Naive thymus-derived CD4-positive, alpha-beta T cell (primary cell): ENCODE measurements at regions of chr5 and their contacts with region 1.

Region 1: GRCh38 chr5:109900911-109901627 is 211.3 kb downstream of the MAN2A1 start:
- DNase-seq: no peak
- ATAC-seq: no peak
- H3K4me3 ChIP-seq: no peak overlapping the region
- H3K4me3 Mint-ChIP-seq: no peak overlapping the region
- H3K27ac ChIP-seq: no peak overlapping the region
- H3K27ac Mint-ChIP-seq: no peak overlapping the region
- H3K4me1 ChIP-seq: no peaks in the 10 kb centered on the region
- H3K4me1 Mint-ChIP-seq: peaks cover 0 to 22% (median 8%) of the 10 kb centered on the region in 7 donors
- H3K27me3 ChIP-seq: no peaks in the 10 kb centered on the region
- H3K27me3 Mint-ChIP-seq: peaks cover 0 to 4% (median 0%) of the 10 kb centered on the region in 5 donors

Region 2: DNA sequence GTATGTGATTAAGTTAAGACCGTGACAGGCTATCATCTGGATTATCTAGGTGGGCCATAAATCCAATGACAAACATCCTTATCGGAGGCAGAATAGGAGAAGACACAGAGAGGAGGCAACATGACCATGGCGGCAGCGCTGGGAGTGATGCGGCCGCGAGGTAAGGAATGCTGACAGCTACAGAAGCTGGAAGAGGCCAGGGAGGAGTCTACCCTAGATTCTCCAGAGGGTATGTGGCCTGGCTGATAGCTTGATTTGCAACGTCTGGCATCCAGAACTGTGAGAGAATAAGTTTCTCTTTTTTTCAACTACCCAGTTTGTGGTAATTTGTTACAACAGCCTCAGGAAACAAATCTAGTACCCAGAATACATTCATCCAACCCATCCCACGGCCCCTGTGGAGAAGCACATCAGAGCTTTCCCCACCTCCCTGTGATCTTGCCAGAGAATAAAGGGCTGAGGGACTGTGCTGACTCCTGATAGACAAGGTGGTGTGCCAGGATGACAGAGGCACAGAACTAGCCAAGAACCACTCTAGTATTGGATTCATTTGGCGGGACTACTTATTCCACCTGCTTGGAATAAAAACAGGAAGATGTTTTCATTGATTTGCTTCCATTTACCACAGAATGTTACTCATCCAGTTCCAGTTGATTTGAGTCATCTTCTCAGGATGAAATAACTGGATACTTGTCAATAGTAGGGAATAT is 24.0 kb before region 1 on chr5:
- CTCF ChIA-PET with region 1: no interaction called
- POLR2A ChIA-PET with region 1: interaction called, 3 read pairs
- intact Hi-C with region 1: loop called in 1 of 2 experiments (anchors 2 kb)
- DNase-seq: no peak
- ATAC-seq: no peak
- H3K4me3 ChIP-seq: no peak overlapping the region
- H3K4me3 Mint-ChIP-seq: peak overlapping the region in 1 of 10 donors; percentile 75
- H3K27ac ChIP-seq: no peak overlapping the region
- H3K27ac Mint-ChIP-seq: peak overlapping the region in 2 of 9 donors; percentile 42 to 76
- H3K4me1 ChIP-seq: peaks cover 0 to 17% of the 10 kb centered on the region in 2 donors
- H3K4me1 Mint-ChIP-seq: peaks cover 17 to 61% (median 45%) of the 10 kb centered on the region in 7 donors
- H3K27me3 ChIP-seq: no peaks in the 10 kb centered on the region
- H3K27me3 Mint-ChIP-seq: no peaks in the 10 kb centered on the region

Region 3: DNA sequence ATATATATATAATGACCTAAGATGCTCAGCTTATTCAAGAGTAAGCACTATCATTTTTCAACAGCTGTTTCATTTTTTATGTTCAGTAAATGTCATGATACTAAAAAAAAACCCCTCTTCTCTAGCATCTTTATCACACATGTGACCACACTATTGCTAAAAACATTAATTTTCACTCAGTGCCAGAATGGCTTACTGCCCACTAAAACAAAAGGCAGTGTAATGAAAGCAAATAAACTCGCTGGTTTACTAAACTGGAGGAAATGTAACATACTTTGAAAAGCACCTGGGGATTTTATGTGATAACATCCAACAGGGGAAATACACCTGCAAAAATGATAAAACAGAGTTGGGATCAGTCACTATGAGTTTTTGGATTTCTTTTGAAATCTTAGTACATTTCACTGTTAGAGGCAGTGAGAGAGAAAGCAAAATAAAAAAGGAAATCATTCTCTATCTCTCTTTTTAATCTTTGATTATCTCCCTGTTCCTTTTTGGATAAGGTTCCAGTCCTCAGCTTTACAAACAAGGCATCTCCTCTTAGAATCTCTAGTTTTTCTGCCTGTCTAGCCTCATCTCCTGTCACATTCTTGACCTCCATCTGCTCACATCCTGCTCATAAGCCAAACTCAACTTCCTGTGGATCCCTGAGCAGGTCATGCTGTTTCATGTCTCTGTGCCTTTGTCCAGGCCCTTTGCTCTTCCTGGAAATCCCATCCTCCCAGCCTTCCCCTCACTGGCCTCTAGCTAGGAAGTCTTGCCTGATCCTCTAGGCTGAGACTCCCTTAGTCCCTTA is 126.7 kb after region 1 on chr5:
- CTCF ChIA-PET with region 1: no interaction called
- POLR2A ChIA-PET with region 1: no interaction called
- intact Hi-C with region 1: no loop called
- DNase-seq: no peak
- ATAC-seq: no peak
- H3K4me3 ChIP-seq: no peak overlapping the region
- H3K4me3 Mint-ChIP-seq: no peak overlapping the region
- H3K27ac ChIP-seq: no peak overlapping the region
- H3K27ac Mint-ChIP-seq: peak overlapping the region in 2 of 9 donors; percentile 10 to 23
- H3K4me1 ChIP-seq: peaks cover 8 to 11% of the 10 kb centered on the region in 2 donors
- H3K4me1 Mint-ChIP-seq: peaks cover 5 to 46% (median 31%) of the 10 kb centered on the region in 7 donors
- H3K27me3 ChIP-seq: no peaks in the 10 kb centered on the region
- H3K27me3 Mint-ChIP-seq: no peaks in the 10 kb centered on the region

Region 4: GRCh38 chr5:110625376-110625999 is 724.4 kb after region 1 on chr5:
- CTCF ChIA-PET with region 1: no interaction called
- POLR2A ChIA-PET with region 1: no interaction called
- intact Hi-C with region 1: no loop called
- DNase-seq: peak in 4 of 9 donors; percentile 18 to 41 (median 36)
- ATAC-seq: no peak
- H3K4me3 ChIP-seq: no peak overlapping the region
- H3K4me3 Mint-ChIP-seq: no peak overlapping the region
- H3K27ac ChIP-seq: no peak overlapping the region
- H3K27ac Mint-ChIP-seq: no peak overlapping the region
- H3K4me1 ChIP-seq: no peaks in the 10 kb centered on the region
- H3K4me1 Mint-ChIP-seq: no peaks in the 10 kb centered on the region
- H3K27me3 ChIP-seq: no peaks in the 10 kb centered on the region
- H3K27me3 Mint-ChIP-seq: peaks cover 0 to 11% (median 8%) of the 10 kb centered on the region in 5 donors

Region 5: GRCh38 chr5:111360173-111360572 is 1459.1 kb after region 1 on chr5:
- CTCF ChIA-PET with region 1: no interaction called
- POLR2A ChIA-PET with region 1: no interaction called
- intact Hi-C with region 1: no loop called
- DNase-seq: no peak
- ATAC-seq: no peak
- H3K4me3 ChIP-seq: no peak overlapping the region
- H3K4me3 Mint-ChIP-seq: peak overlapping the region in 1 of 10 donors; percentile 2
- H3K27ac ChIP-seq: no peak overlapping the region
- H3K27ac Mint-ChIP-seq: peak overlapping the region in 2 of 9 donors; percentile 3 to 70
- H3K4me1 ChIP-seq: peaks cover 0 to 23% of the 10 kb centered on the region in 2 donors
- H3K4me1 Mint-ChIP-seq: peaks cover 4 to 78% (median 48%) of the 10 kb centered on the region in 7 donors
- H3K27me3 ChIP-seq: no peaks in the 10 kb centered on the region
- H3K27me3 Mint-ChIP-seq: no peaks in the 10 kb centered on the region